ENCODE measurements at regions of chr6 and their contacts with region 1.

Region 1: DNA sequence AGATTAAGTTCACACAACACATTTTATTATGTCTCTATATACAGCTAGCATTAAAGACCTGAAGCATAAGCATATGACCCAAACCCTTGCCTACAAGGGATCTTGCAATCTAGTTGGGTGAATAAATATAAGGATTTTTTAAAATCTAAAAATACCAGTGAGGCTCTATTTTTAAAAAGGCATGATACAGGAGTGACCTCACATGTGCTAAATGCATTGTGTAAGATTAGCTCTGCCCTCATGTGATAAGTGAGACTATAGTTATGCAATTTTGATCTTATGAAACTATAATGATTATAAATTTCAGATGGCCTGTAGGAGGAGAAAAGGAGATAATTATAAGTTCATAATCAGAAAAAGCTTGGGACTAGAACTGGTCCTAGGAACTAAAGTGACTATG is 451.0 kb upstream of the MAN1A1 start:
- DNase-seq: no peak
- H3K4me3 ChIP-seq: no peak overlapping the region
- H3K27ac ChIP-seq: peak overlapping the region in 1 of 2 donors; percentile 5
- H3K4me1 ChIP-seq: no peaks in the 10 kb centered on the region
- H3K27me3 ChIP-seq: no peaks in the 10 kb centered on the region
- CTCF ChIP-seq: no peak
- POLR2A ChIP-seq: no peak

Region 2: GRCh38 chr6:119781365-119781764 is 19.2 kb before region 1 on chr6:
- intact Hi-C with region 1: loop called (anchors 2 kb)
- DNase-seq: no peak
- H3K4me3 ChIP-seq: no peak overlapping the region
- H3K27ac ChIP-seq: no peak overlapping the region
- H3K4me1 ChIP-seq: no peaks in the 10 kb centered on the region
- H3K27me3 ChIP-seq: no peaks in the 10 kb centered on the region
- CTCF ChIP-seq: no peak
- POLR2A ChIP-seq: no peak

Measured in breast epithelium (tissue), 4 donors.